Activated CD4-positive, alpha-beta T cell treated with anti-CD3 and anti-CD28 coated beads, Interleukin-2, amount 10 ng/mL, durations not matched to agents 24 days and 14 days (primary cell): ENCODE measurements at regions of chr17 and their contacts with region 1.

Region 1: DNA sequence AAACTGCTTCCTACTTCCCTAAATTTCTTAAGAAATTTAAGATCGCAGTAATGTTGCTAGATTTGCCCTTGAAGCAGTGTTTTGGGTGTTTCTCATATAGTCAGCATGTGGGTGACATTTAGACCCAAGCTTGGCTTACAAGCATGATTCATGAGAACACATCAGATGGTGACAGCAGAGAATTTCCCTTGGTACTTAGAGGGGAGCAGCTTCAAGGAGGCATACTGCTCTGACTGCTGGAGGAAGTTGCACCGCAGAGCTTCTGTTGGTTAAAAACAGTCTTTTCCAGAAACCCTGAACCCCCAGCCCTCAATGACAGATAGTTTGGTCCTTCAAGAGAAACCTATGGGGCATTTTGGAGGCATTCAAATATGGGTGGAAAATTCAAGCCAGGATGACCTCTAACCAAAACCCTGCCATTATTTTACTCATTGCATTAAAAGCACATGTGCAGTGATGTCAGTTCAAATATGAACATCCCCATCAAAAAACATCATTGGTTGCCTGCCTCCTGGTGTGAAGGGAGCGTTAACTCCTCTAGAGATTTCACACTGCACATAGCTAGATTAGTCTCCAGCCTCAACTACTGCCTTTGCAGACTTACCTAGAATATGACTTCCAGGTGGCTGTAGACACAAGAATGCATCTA is 201.5 kb upstream of the CACNG5 start:
- DNase-seq: peak; percentile 87
- H3K4me3 Mint-ChIP-seq: peak overlapping the region; percentile 39
- H3K27ac Mint-ChIP-seq: peak overlapping the region; percentile 86
- H3K4me1 Mint-ChIP-seq: peaks cover 52% of the 10 kb centered on the region
- H3K27me3 Mint-ChIP-seq: no peaks in the 10 kb centered on the region

Region 2: DNA sequence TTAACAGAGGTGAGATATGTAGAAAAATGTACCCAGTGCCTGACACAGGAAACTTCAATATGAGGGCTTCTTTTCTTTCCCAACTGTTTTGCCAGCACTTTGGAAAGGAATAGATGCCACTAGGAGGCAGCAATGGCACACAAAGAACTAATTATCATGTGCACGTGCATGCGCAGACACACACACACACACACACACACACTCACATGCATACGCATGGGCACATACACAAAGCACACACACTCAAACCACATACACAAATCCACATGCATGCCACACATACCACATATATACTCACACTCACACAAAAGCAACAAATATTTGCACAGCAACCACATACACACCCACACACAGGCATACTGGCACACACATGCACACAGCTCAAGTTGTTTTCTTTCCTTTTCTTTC is 432.8 kb before region 1 on chr17:
- intact Hi-C with region 1: loop called (anchors 5 kb)
- DNase-seq: peak; percentile 80
- H3K4me3 Mint-ChIP-seq: no peak overlapping the region
- H3K27ac Mint-ChIP-seq: peak overlapping the region; percentile 43
- H3K4me1 Mint-ChIP-seq: peaks cover 9% of the 10 kb centered on the region
- H3K27me3 Mint-ChIP-seq: no peaks in the 10 kb centered on the region

Region 3: DNA sequence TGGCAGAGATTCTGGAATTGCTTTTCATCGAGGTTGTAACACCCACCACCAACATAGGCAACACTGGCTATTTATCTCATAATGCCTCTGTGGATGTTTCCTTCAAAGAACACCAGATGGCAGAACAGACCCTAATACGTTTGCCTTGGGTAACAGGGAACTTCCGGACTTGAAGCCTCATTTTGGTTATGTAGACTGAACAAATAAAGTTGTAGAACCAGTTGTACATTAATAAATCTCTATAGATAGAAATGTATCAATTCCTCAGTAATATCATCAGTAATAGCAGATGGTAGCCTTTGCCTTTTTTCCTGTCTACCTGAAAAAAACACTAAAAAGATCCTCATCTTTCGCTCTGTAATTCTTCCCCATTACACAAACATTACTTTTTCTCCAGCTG is 378.3 kb before region 1 on chr17:
- intact Hi-C with region 1: loop called (anchors 2 kb)
- DNase-seq: peak; percentile 84
- H3K4me3 Mint-ChIP-seq: peak overlapping the region; percentile 66
- H3K27ac Mint-ChIP-seq: peak overlapping the region; percentile 52
- H3K4me1 Mint-ChIP-seq: peaks cover 15% of the 10 kb centered on the region
- H3K27me3 Mint-ChIP-seq: no peaks in the 10 kb centered on the region

Region 4: DNA sequence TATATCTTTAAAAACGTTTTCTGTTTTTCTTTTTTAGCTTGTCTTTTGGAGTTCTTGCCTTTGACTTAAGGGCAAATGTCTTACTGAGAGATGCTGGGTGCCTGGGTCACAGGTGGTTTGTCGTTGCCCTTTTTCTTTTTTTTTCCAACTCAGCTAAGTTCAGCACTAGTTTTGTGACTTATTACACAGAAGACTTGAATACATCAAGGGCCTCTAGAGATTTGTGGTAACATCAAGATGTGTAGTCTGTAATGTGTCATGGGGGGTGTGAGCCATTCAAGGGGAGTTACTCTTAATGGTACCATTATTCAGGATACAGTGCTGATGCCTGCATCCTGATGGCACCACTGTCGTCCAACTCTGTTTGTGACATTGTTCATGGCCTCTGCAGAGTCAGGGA is 236.0 kb before region 1 on chr17:
- intact Hi-C with region 1: loop called (anchors 10 kb)
- DNase-seq: peak; percentile 62
- H3K4me3 Mint-ChIP-seq: peak overlapping the region; percentile 35
- H3K27ac Mint-ChIP-seq: peak overlapping the region; percentile 86
- H3K4me1 Mint-ChIP-seq: peaks cover 67% of the 10 kb centered on the region
- H3K27me3 Mint-ChIP-seq: no peaks in the 10 kb centered on the region

Region 5: DNA sequence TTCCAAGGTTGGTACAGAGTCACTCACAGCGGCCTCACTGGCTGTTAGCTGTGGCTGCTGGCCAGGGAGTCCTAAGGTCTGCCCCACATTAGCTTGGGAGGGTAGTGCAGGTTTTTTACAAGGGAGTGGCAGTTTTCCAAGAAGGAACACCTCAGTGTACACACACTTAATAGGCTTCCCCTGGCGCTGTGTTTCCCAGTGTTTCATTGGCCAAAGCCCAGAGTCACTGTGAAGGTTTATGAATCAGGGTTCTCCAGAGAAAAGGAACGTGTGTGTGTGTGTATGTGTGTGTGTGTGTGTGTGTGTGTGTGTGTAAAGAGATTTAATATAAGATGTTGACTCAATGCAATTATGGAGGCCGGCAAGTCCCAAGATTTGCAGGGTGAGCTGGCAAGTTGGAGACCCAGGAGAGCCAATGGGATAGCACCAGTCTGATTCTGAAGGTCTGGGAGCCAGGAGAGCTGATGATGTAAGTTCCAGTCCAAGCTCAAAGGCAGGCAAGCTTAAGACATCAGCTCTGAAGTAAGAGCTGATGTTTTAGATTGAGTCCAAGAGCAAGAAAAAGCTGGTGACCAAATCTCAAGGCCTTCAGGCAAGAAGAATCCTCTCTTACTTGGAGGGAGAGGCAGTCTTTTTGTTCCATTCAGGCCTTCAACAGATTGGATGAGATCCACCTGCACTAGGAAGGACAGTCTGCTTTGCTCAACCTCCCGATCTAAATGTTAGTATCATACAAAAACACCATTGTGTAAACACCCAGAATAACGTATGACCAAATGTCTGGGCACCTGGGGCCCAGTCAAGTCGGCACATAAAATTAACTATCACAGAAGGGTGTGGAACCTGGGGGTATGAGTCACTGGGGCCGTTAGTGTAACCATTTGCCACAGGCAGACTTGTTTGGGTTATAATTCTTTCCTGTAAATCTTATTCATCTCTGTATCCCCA is 124.3 kb before region 1 on chr17:
- intact Hi-C with region 1: loop called (anchors 2 kb)
- DNase-seq: peak; percentile 78
- H3K4me3 Mint-ChIP-seq: peak overlapping the region; percentile 62
- H3K27ac Mint-ChIP-seq: peak overlapping the region; percentile 96
- H3K4me1 Mint-ChIP-seq: peaks cover 68% of the 10 kb centered on the region
- H3K27me3 Mint-ChIP-seq: no peaks in the 10 kb centered on the region

Region 6: GRCh38 chr17:66655861-66656260 is 22.4 kb after region 1 on chr17:
- intact Hi-C with region 1: loop called (anchors 1 kb)
- DNase-seq: peak; percentile 67
- H3K4me3 Mint-ChIP-seq: peak overlapping the region; percentile 9
- H3K27ac Mint-ChIP-seq: peak overlapping the region; percentile 80
- H3K4me1 Mint-ChIP-seq: peaks cover 48% of the 10 kb centered on the region
- H3K27me3 Mint-ChIP-seq: no peaks in the 10 kb centered on the region

Region 7: DNA sequence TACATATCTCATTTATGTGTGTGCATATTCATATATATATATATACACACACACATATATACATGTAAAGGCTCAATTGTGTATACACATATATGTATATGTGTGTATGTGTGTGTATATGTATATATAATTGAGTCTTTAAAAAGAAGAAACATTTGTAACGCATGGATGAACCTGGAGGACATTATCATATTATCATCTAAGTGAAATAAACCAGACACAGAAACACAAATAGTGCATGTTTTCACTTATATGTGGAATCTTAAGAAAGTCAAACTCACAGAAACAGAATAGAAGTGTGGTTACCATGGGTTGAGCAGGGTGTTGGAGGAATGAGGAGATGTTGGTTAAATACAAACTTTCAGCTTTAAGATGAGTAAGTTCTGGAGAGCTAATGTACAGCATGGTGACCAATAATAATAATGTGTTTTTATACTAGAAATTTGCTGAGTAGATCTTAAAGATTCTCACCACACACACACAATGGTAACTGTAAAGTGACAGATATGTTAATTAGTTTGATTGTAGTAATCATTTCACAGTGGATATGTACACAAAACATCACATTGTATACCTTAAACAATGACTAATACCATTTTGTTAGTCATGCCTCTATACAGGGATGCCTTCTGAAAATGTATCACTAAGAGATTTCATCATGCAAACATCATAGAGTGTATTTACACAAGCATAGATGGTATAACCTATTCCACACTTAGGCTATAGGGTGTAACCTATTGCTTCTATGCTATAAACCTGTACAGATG is 68.8 kb after region 1 on chr17:
- intact Hi-C with region 1: loop called (anchors 1 kb)
- DNase-seq: no peak
- H3K4me3 Mint-ChIP-seq: no peak overlapping the region
- H3K27ac Mint-ChIP-seq: peak overlapping the region; percentile 54
- H3K4me1 Mint-ChIP-seq: peaks cover 14% of the 10 kb centered on the region
- H3K27me3 Mint-ChIP-seq: no peaks in the 10 kb centered on the region